HCT116 (cell line): ENCODE measurements at regions of chr5 and their contacts with region 1.

Region 1: DNA sequence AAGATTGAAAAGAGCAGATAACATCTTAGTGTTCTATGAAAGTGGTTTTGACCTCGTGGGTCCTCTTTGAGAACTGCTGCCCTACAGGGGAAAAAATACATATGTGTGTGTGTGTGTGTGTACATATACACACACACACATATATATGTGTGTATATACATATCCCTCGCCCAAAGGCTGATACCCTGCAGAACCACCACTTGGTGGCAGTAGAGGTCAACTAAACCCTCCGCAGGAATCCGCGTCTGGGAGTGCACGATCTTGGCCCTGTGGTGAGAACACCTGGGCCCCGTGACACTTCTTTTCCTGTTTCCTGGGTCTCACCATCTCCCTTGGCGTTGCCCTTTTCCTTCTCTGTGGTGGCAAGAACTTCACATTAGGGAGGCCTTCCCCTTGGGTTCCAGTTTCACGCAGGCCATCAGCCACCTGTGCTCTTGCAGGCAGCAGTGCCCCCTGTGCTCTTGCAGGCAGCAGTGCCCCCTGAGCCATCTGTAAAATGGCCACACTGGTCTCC is 8.2 kb downstream of the IL9 start:
- DNase-seq: peak; percentile 72
- ATAC-seq: peak; percentile 97
- H3K4me3 ChIP-seq: no peak overlapping the region
- H3K27ac ChIP-seq: no peak overlapping the region
- H3K4me1 ChIP-seq: peaks cover 6 to 12% of the 10 kb centered on the region in 2 experiments; a peak in 3 of 4 replicates
- H3K27me3 ChIP-seq: no peaks in the 10 kb centered on the region
- CTCF ChIP-seq: peak; percentile 75 to 94 (median 87)
- POLR2A ChIP-seq: no peak
- RAD21 ChIP-seq: peak; percentile 95

Region 2: GRCh38 chr5:136082390-136083193 is 195.2 kb after region 1 on chr5:
- CTCF ChIA-PET with region 1: no interaction called
- POLR2A ChIA-PET with region 1: no interaction called
- RAD21 ChIA-PET with region 1: no interaction called
- intact Hi-C with region 1: loop called (anchors 1 kb)
- DNase-seq: peak; percentile 57
- ATAC-seq: peak; percentile 77
- H3K4me3 ChIP-seq: no peak overlapping the region
- H3K27ac ChIP-seq: no peak overlapping the region
- H3K4me1 ChIP-seq: peaks cover 0 to 17% of the 10 kb centered on the region in 2 experiments; a peak in 1 of 4 replicates
- H3K27me3 ChIP-seq: no peaks in the 10 kb centered on the region
- CTCF ChIP-seq: peak; percentile 77 to 88 (median 84)
- POLR2A ChIP-seq: no peak
- RAD21 ChIP-seq: peak; percentile 78

Region 3: GRCh38 chr5:136174021-136174659 is 286.7 kb after region 1 on chr5:
- CTCF ChIA-PET with region 1: no interaction called
- POLR2A ChIA-PET with region 1: no interaction called
- RAD21 ChIA-PET with region 1: no interaction called
- intact Hi-C with region 1: loop called (anchors 1 kb)
- DNase-seq: peak; percentile 15
- ATAC-seq: peak; percentile 86
- H3K4me3 ChIP-seq: no peak overlapping the region
- H3K27ac ChIP-seq: no peak overlapping the region
- H3K4me1 ChIP-seq: no peaks in the 10 kb centered on the region
- H3K27me3 ChIP-seq: no peaks in the 10 kb centered on the region
- CTCF ChIP-seq: peak; percentile 54 to 71 (median 65); a peak in 5 of 6 replicates
- POLR2A ChIP-seq: no peak
- RAD21 ChIP-seq: peak; percentile 70

Region 4: GRCh38 chr5:136212252-136212721 is 324.9 kb after region 1 on chr5:
- CTCF ChIA-PET with region 1: interaction called, 3 read pairs
- POLR2A ChIA-PET with region 1: no interaction called
- RAD21 ChIA-PET with region 1: no interaction called
- intact Hi-C with region 1: loop called (anchors 1 kb)
- DNase-seq: peak; percentile 24
- ATAC-seq: peak; percentile 83
- H3K4me3 ChIP-seq: no peak overlapping the region
- H3K27ac ChIP-seq: no peak overlapping the region
- H3K4me1 ChIP-seq: no peaks in the 10 kb centered on the region
- H3K27me3 ChIP-seq: no peaks in the 10 kb centered on the region
- CTCF ChIP-seq: peak; percentile 71 to 97 (median 92); a peak in 5 of 6 replicates
- POLR2A ChIP-seq: no peak
- RAD21 ChIP-seq: peak; percentile 87

Region 5: GRCh38 chr5:136424835-136425584 is 537.6 kb after region 1 on chr5:
- CTCF ChIA-PET with region 1: no interaction called
- POLR2A ChIA-PET with region 1: no interaction called
- RAD21 ChIA-PET with region 1: no interaction called
- intact Hi-C with region 1: loop called (anchors 2 kb)
- DNase-seq: peak; percentile 47
- ATAC-seq: peak; percentile 99
- H3K4me3 ChIP-seq: no peak overlapping the region
- H3K27ac ChIP-seq: no peak overlapping the region
- H3K4me1 ChIP-seq: no peaks in the 10 kb centered on the region
- H3K27me3 ChIP-seq: peaks cover 22% of the 10 kb centered on the region
- CTCF ChIP-seq: peak; percentile 75 to 93 (median 93)
- POLR2A ChIP-seq: no peak
- RAD21 ChIP-seq: peak; percentile 76